ENCODE measurements at regions of chr5 and their contacts with region 1.

Region 1: GRCh38 chr5:77560677-77561263 is 68.7 kb upstream of the WDR41 start:
- DNase-seq: peak; percentile 29
- H3K4me3 ChIP-seq: no peak overlapping the region
- CTCF ChIP-seq: peak; percentile 40

Region 2: DNA sequence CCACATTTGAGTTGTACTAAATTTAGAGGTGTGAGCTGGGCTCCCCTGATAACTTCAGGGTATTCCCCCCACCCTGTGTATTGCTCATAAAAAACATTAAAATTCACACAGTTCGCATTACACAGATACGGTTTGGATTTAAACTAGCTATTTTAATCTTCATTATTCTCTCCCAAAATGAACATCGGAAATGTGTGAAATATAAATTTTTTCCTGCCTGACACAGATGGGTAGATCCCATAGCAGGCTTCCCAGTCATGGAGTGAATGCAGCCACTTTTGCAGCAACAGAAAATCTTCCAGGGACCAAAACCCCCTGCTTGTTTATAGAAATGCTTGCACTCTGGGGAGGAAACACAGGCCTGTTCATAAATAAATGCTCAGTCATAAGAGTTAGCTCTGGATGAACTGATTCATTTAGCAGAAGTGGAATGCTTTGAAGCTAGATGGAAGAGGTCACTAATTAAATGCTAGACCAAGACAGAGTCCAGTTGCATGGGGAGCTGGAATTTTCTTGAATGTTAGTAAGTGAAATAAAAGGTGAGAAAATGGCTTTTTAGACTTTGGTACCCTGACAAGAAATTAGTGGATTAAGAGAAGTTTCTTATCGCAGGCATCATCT is 234.7 kb before region 1 on chr5:
- CTCF ChIA-PET with region 1: no interaction called
- POLR2A ChIA-PET with region 1: no interaction called
- DNase-seq: no peak
- H3K4me3 ChIP-seq: no peak overlapping the region
- CTCF ChIP-seq: no peak

Region 3: DNA sequence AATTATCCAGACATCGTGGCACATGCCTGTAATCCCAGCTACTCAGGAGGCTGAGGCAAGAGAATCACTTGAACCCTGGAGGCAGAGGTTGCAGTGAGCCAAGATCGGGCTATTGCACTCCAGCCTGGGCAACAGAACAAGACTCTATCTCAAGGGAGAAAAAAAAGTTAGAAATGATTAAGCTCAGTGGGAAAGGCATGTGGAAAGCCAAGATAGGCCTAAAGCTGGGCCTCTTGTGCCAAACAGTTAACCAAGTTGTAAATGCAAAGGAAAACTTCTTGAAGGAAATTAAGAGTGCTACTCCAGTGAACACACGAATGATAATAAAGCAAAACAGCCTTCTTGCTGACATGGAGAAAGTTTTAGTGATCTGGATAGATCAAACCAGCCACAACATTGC is 172.4 kb after region 1 on chr5:
- CTCF ChIA-PET with region 1: no interaction called
- POLR2A ChIA-PET with region 1: no interaction called
- DNase-seq: no peak
- H3K4me3 ChIP-seq: no peak overlapping the region
- CTCF ChIP-seq: no peak

Region 4: GRCh38 chr5:78008356-78008967 is 447.7 kb after region 1 on chr5:
- CTCF ChIA-PET with region 1: interaction called, 10 read pairs
- POLR2A ChIA-PET with region 1: no interaction called
- DNase-seq: no peak
- H3K4me3 ChIP-seq: no peak overlapping the region
- CTCF ChIP-seq: peak; percentile 69

Region 5: GRCh38 chr5:78300464-78301045 is 739.8 kb after region 1 on chr5:
- CTCF ChIA-PET with region 1: interaction called, 16 read pairs
- POLR2A ChIA-PET with region 1: no interaction called
- DNase-seq: no peak
- H3K4me3 ChIP-seq: no peak overlapping the region
- CTCF ChIP-seq: no peak

Measured in AG04449 (cell line).